Naive thymus-derived CD4-positive, alpha-beta T cell (primary cell): ENCODE measurements at regions of chr2 and their contacts with region 1.

Region 1: DNA sequence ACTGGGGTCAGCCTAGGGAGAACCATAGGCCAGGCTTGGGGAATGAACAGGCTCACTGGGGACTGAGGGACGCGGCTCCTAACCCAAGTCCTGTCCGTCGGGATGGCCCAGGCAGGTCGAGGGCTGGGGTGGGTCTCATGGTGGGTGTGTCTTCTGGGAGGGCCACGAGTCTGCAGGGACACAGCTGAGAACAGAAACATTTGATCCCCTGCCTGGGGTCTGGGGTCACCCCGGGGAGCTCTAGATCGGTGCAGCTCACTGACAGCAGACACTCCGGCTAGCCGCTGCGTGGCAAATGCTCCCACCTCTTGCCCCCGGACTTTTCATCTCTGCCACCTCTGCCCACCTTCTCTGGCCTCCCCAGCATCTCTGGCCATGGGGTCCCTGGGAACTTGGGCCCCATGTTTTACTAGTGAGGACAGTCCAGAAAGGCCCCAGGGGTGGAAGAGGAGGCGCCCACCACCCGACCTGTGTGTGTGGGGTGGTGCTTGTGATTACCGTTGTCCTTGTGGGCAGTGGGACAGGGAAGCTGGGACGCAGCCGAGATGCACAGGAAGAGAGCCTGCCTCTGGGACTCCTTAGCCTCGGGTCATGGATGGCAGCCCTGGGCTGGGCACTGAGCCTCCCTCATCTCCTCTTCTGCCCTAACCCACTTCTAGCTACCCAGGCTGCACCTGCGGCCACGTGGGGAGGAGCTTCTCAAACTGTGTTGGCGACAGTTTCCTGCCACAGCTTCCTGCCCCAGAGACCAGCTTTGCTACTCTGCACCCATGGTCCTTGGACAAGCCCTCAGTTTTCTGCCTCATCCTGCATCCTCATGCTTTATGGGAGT is 4.9 kb downstream of the ZAP70 start:
- DNase-seq: peak in 8 of 9 donors; percentile 66 to 74 (median 69)
- ATAC-seq: peak; percentile 87
- H3K4me3 ChIP-seq: peak overlapping the region; percentile 68
- H3K4me3 Mint-ChIP-seq: peak overlapping the region; percentile 86 to 100 (median 94)
- H3K27ac ChIP-seq: peak overlapping the region; percentile 95
- H3K27ac Mint-ChIP-seq: peak overlapping the region; percentile 89 to 100 (median 97)
- H3K4me1 ChIP-seq: peaks cover 73 to 77% of the 10 kb centered on the region in 2 donors
- H3K4me1 Mint-ChIP-seq: peaks cover 64 to 91% (median 75%) of the 10 kb centered on the region in 7 donors
- H3K27me3 ChIP-seq: no peaks in the 10 kb centered on the region
- H3K27me3 Mint-ChIP-seq: no peaks in the 10 kb centered on the region

Region 2: GRCh38 chr2:97645695-97646629 is 72.3 kb before region 1 on chr2 and contains the start of gene COX5B:
- CTCF ChIA-PET with region 1: no interaction called
- POLR2A ChIA-PET with region 1: interaction called, 18 read pairs
- intact Hi-C with region 1: loop called in 1 of 2 experiments (anchors 2 kb)
- DNase-seq: peak; percentile 91 to 99 (median 98)
- ATAC-seq: peak; percentile 99
- H3K4me3 ChIP-seq: peak within 1 kb of the TSS; percentile 99
- H3K4me3 Mint-ChIP-seq: peak within 1 kb of the TSS; percentile 86 to 97 (median 94)
- H3K27ac ChIP-seq: peak within 1 kb of the TSS; percentile 97
- H3K27ac Mint-ChIP-seq: peak within 1 kb of the TSS; percentile 91 to 99 (median 98)
- H3K4me1 ChIP-seq: peaks cover 15 to 17% of the 10 kb centered on the region in 2 donors
- H3K4me1 Mint-ChIP-seq: peaks cover 15 to 32% (median 26%) of the 10 kb centered on the region in 7 donors
- H3K27me3 ChIP-seq: no peaks in the 10 kb centered on the region
- H3K27me3 Mint-ChIP-seq: no peaks in the 10 kb centered on the region
- total RNA-seq, gene COX5B: 111 to 213 (median 122) TPM

Region 3: DNA sequence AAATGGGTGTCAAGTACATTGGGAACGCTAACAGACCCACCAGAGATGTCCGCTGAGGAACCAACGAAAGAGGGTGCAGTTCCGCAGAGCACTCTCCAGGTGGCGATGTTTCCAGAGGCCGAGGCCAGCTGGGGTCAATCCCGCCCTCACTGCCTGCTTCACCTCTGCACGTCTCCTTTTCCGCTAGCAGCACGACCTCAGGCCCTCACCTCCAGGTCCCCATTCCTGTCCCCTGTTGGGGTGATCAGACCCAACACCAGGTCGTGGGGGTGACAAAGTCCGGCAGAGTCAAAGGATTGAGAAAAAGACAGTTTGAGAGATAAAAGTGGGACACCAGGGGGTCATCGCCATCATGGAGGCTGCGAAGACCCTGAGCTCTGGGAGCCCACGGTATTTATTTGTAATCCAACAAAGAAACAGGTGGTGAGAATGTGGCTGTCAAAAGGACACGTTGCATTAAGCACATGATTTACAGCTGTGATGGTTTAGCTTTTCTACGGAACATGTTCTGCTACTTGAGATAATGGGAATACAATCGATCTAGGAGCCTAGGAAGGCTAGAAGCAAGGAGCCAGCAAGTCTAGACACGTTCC is 22.4 kb after region 1 on chr2:
- CTCF ChIA-PET with region 1: interaction called, 43 read pairs
- POLR2A ChIA-PET with region 1: interaction called, 23 read pairs
- intact Hi-C with region 1: no loop called
- DNase-seq: peak in 5 of 9 donors; percentile 13 to 33 (median 30)
- ATAC-seq: peak; percentile 63
- H3K4me3 ChIP-seq: no peak overlapping the region
- H3K4me3 Mint-ChIP-seq: no peak overlapping the region
- H3K27ac ChIP-seq: no peak overlapping the region
- H3K27ac Mint-ChIP-seq: peak overlapping the region in 8 of 9 donors; percentile 54 to 86 (median 78)
- H3K4me1 ChIP-seq: peaks cover 15 to 55% of the 10 kb centered on the region in 2 donors
- H3K4me1 Mint-ChIP-seq: peaks cover 44 to 66% (median 55%) of the 10 kb centered on the region in 7 donors
- H3K27me3 ChIP-seq: no peaks in the 10 kb centered on the region
- H3K27me3 Mint-ChIP-seq: no peaks in the 10 kb centered on the region

Region 4: DNA sequence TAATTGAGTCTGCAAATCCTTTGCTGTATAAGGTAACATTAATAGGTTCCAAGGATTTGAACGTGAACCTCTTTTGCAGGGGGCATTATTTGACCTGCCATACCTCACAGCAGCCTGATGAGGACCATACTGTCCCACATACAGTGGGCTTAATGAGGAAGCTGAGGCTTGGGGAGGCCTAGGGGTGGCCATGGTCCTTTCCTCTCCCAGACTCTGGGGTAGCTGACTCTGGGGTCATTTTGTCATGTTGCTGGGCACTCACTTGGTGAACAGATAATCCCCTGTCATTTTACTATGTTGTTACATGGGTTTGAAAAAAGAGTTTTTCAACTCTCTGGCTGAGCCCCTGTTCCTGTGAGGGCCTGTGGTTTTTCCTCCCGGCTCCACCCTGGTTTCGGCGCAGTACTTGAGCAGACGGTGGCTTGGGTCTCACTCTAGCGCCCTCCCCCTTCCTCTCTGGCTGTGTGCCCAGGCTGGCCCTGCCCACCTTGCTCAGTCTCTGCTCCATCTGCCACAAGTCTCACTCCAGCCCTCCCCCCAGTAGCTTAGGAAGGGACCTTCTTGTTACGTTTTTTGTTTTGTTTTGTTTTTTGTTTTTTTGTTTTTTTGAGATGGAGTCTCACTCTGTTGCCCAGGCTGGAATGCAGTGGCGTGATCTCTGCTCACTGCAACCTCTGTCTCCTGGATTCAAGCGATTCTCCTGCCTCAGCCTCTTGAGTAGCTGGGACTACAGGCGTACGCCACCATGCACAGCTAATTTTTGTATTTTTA is 747.4 kb after region 1 on chr2:
- CTCF ChIA-PET with region 1: interaction called, 3 read pairs
- POLR2A ChIA-PET with region 1: interaction called, 4 read pairs
- intact Hi-C with region 1: loop called in 1 of 2 experiments (anchors 10 kb)
- DNase-seq: peak; percentile 53 to 92 (median 85)
- ATAC-seq: peak; percentile 74
- H3K4me3 ChIP-seq: peak overlapping the region; percentile 61
- H3K4me3 Mint-ChIP-seq: peak overlapping the region; percentile 78 to 98 (median 87)
- H3K27ac ChIP-seq: peak overlapping the region; percentile 85
- H3K27ac Mint-ChIP-seq: peak overlapping the region; percentile 93 to 99 (median 96)
- H3K4me1 ChIP-seq: peaks cover 85 to 87% of the 10 kb centered on the region in 2 donors
- H3K4me1 Mint-ChIP-seq: peaks cover 70 to 95% (median 88%) of the 10 kb centered on the region in 7 donors
- H3K27me3 ChIP-seq: no peaks in the 10 kb centered on the region
- H3K27me3 Mint-ChIP-seq: no peaks in the 10 kb centered on the region

Region 5: DNA sequence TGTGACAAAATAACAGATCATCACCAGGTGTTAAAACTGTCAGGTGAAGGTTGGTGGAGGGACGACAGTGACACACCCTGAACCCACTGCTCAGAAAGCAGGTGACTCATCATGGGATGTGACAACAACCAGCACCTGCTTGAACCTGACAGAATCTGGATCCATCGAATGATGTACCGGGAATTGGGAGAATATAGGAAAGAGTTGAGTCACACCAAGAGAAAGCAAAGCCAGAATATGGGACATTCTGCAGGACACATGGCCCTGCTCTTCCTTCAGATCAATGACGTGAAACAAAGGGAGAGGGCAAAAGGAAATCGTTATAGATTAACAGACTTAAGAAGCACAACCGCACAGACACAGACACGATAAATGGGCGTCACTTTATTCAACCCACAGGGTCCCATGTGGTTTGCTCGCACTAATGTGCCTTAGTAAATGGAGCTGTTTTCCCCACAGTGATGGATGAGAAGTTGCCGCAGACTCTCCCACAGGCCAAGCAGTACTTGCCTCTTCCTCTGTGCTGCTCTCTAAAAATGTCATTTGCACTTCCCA is 1117.6 kb after region 1 on chr2:
- CTCF ChIA-PET with region 1: no interaction called
- POLR2A ChIA-PET with region 1: no interaction called
- intact Hi-C with region 1: loop called in 1 of 2 experiments (anchors 5 kb)
- DNase-seq: peak in 7 of 9 donors; percentile 55 to 78 (median 72)
- ATAC-seq: peak; percentile 87
- H3K4me3 ChIP-seq: peak overlapping the region; percentile 1
- H3K4me3 Mint-ChIP-seq: peak overlapping the region; percentile 32 to 79 (median 52)
- H3K27ac ChIP-seq: peak overlapping the region; percentile 66
- H3K27ac Mint-ChIP-seq: peak overlapping the region; percentile 78 to 98 (median 88)
- H3K4me1 ChIP-seq: peaks cover 16 to 43% of the 10 kb centered on the region in 2 donors
- H3K4me1 Mint-ChIP-seq: peaks cover 24 to 51% (median 28%) of the 10 kb centered on the region in 7 donors
- H3K27me3 ChIP-seq: no peaks in the 10 kb centered on the region
- H3K27me3 Mint-ChIP-seq: peaks cover 0 to 17% (median 0%) of the 10 kb centered on the region in 5 donors